A673 (cell line): ENCODE measurements at regions of chr18 and their contacts with region 1.

Region 1: GRCh38 chr18:61635901-61636528 is 256.8 kb downstream of the RNF152 start:
- DNase-seq: peak; percentile 60
- H3K4me3 ChIP-seq: no peak overlapping the region
- H3K27ac ChIP-seq: no peak overlapping the region
- H3K4me1 ChIP-seq: no peaks in the 10 kb centered on the region
- H3K27me3 ChIP-seq: no peaks in the 10 kb centered on the region
- CTCF ChIP-seq: peak; percentile 93

Region 2: DNA sequence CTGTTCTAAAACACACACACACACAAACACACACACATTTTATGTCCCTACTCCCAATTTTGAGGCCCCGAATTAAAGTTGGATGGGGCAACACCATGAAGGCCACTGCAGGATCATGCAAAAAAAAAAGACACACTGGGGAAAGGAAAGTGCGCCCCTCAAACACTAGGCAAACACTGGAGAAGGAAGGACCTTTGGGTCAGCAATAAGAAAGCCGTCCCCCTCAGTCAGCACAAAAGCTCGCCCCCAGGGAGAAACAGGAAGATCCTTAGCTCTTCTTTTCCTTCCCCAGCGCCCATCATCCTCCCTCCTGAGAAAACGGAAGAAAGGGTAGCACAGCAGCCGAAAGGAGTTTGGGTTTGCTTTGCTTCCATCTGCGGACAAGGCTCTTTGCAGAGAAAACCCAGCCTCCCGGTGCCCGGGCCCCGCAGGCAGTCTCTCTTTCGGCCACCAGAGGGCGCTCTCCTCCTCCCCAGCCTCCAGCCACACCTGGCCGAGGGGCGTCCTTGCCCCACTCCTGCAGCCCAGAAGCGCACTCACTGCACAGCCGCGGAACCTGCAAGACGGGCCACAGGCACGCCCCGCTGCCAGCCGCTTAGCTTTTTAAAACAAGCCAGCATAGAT is 54.3 kb before region 1 on chr18:
- CTCF ChIA-PET with region 1: interaction called, 7 read pairs
- POLR2A ChIA-PET with region 1: no interaction called
- intact Hi-C with region 1: loop called (anchors 5 kb)
- DNase-seq: peak; percentile 79
- H3K4me3 ChIP-seq: peak overlapping the region; percentile 43
- H3K27ac ChIP-seq: no peak overlapping the region
- H3K4me1 ChIP-seq: peaks cover 1% of the 10 kb centered on the region
- H3K27me3 ChIP-seq: no peaks in the 10 kb centered on the region
- CTCF ChIP-seq: peak; percentile 99

Region 3: DNA sequence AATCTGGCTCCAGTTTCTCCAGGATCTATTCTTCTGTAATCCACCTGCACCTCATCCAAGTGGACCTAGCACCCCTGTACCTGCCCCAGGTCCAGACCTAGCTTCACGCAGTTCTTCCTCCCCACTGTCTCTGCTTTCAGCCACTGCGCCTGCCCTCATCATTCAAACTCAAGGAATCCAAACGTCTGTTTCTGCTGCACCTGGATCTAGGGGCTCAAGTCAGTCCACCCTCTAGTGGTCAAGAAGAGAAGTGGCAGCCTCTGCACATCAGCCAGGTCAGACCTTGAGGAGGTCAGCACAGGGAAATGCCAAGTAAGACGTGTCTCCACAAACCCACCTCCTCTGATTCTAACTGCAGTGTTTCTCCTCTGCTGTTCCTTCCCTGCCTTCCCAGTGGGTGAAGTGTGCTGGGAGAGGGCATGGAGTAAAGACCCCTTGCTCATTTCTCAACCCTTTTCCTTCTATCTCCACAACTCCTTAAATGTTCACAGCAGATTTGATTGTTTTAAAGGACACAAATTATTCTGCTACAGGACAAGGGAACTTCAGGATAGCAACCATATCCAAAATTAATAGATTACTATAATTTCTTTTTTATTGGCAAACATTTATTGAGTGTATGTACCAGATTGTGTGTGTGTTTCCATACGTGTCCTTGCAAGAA is 265.4 kb after region 1 on chr18:
- CTCF ChIA-PET with region 1: no interaction called
- POLR2A ChIA-PET with region 1: no interaction called
- intact Hi-C with region 1: loop called (anchors 2 kb)
- DNase-seq: peak; percentile 61
- H3K4me3 ChIP-seq: no peak overlapping the region
- H3K27ac ChIP-seq: no peak overlapping the region
- H3K4me1 ChIP-seq: no peaks in the 10 kb centered on the region
- H3K27me3 ChIP-seq: no peaks in the 10 kb centered on the region
- CTCF ChIP-seq: peak; percentile 91